Colonic mucosa (tissue), 4 donors: ENCODE measurements at regions of chr12 and their contacts with region 1.

Region 1: DNA sequence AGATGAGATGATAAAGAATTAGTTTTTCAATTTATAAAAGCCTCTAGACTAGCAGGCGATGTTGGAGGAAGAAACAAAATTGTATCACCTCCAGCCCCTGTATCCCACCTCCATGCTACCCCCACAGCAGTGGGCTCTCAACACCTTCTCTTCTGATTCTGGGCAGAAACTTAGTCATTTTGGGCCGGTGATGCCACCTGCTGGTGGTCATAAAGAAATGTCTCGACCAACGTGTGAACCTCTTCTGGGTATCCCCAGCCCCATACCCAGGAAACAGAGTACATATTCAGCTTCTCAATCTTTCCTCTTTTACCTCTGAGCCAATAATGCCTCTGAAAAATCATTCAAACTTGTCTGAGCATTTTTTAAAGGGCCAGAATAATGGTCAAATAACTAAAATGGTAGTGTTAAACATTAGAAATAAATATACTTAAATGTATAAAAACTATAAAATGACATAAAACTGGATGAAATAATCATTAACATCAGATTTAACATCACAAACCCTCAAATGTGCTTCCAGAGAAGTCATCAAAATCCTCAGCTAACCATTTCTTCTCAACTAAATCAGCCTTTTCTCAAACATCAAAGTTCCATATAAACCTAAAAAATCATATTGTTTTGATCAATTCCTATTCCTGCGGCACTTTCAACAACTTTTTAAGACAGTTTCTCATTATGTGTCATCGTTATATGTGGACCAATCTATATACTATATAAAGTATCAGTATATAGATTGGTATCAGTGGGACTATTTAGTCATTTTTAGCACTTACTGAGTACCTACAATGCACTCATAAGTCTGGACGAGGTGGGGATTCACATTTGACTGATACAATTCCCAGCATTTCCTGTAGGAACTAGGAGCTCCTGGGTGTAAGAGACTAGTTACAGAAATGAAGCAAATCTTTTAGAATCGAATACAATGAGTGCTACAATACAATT is 69.4 kb downstream of the ATXN2 start:
- DNase-seq: peak; percentile 27
- H3K4me3 ChIP-seq: no peak overlapping the region
- H3K27ac ChIP-seq: no peak overlapping the region
- H3K4me1 ChIP-seq: no peaks in the 10 kb centered on the region
- H3K27me3 ChIP-seq: no peaks in the 10 kb centered on the region
- CTCF ChIP-seq: peak; percentile 55

Region 2: DNA sequence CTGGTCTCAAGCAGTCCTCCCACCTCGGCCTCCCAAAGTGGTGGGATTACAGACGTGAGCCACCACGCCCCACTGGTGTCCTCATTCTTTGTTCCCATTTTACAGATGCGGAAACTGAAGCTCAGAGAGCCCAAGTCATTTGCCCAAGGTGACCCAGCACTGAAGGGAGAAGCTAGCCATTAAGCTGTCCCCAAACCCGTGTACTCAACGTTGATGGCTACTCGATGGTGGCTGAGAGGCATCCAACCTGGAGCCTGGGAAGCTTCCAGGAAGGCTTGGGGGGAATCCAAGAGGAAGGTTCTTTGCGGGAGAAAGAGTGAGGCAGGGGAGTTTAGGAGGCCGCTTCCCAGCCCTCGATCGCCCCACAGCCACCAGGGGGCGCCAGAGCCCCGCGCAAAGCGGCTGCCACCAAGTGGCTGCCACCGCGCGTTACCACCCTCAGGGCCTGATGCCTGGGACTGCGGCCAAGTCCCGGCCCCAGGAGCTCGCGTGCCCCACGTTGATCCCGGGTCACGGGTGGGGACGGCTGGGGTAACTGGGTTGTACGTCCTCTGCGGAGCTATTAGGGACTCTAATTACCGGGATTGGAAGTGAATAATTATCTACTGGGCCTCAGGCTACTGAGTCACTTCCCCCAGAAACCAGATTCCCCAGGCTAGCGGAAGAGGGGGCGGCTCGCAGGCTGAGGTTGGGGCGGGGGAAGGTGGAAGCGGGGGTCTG is 132.8 kb before region 1 on chr12:
- intact Hi-C with region 1: loop called (anchors 2 kb)
- DNase-seq: peak; percentile 87
- H3K4me3 ChIP-seq: no peak overlapping the region
- H3K27ac ChIP-seq: no peak overlapping the region
- H3K4me1 ChIP-seq: no peaks in the 10 kb centered on the region
- H3K27me3 ChIP-seq: no peaks in the 10 kb centered on the region
- CTCF ChIP-seq: peak; percentile 95